Dendritic cell treated with granulocyte-macrophage colony-stimulating factor and Interleukin-4, amounts not matched to agents 40 ng/mL and 50 ng/mL, for 4 days (primary cell): ENCODE measurements at regions of chr9 and their contacts with region 1.

Region 1: DNA sequence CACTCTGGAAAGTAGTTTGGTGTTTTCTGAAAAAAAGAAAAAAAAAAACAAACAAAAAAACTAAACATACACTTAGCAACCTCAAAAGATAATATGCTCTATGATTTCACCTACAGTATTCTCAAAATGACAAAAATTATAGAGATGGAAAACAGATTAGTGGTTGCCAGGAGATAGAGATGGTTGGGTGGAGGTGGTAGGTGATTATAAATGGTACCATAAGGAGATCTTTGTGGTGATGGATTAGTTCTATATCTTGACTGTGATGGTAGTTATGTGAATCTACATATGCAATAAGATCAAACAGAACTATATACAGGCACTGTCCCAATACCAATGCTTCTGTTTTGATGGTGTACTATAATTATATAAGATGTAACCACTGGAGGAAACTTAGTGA is 32.0 kb downstream of the PTBP3 start:
- H3K4me3 Mint-ChIP-seq: no peak overlapping the region
- H3K27ac Mint-ChIP-seq: no peak overlapping the region
- H3K4me1 Mint-ChIP-seq: peaks cover 52% of the 10 kb centered on the region
- H3K27me3 Mint-ChIP-seq: no peaks in the 10 kb centered on the region

Region 2: GRCh38 chr9:112125951-112126388 is 175.4 kb before region 1 on chr9:
- intact Hi-C with region 1: no loop called
- H3K4me3 Mint-ChIP-seq: no peak overlapping the region
- H3K27ac Mint-ChIP-seq: no peak overlapping the region
- H3K4me1 Mint-ChIP-seq: no peaks in the 10 kb centered on the region
- H3K27me3 Mint-ChIP-seq: no peaks in the 10 kb centered on the region

Region 3: DNA sequence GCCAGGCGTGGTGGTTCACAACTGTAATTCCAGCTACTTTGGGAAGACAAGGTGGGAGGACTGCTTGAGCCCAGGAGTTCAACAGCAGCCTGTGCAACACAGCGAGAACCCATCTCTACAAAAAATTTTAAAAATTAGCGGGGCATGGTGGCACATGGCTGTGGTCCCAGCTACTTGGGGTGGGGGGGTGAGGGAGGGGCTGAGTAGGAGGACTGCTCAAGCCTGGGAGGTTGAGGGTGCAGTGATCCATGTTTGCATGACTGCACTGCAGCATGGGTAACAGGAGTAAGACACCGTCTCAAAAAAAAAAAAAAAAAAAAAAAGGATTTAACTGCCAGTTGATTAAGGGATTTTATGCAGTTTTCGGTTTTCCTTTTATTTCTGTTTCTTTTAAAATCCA is 33.0 kb before region 1 on chr9:
- intact Hi-C with region 1: loop called (anchors 5 kb)
- H3K4me3 Mint-ChIP-seq: no peak overlapping the region
- H3K27ac Mint-ChIP-seq: no peak overlapping the region
- H3K4me1 Mint-ChIP-seq: no peaks in the 10 kb centered on the region
- H3K27me3 Mint-ChIP-seq: no peaks in the 10 kb centered on the region